Activated CD4-positive, alpha-beta T cell treated with anti-CD3 and anti-CD28 coated beads, Interleukin-2, amount 10 ng/mL, durations not matched to agents 24 days and 14 days (primary cell): ENCODE measurements at regions of chr9 and their contacts with region 1.

Region 1: DNA sequence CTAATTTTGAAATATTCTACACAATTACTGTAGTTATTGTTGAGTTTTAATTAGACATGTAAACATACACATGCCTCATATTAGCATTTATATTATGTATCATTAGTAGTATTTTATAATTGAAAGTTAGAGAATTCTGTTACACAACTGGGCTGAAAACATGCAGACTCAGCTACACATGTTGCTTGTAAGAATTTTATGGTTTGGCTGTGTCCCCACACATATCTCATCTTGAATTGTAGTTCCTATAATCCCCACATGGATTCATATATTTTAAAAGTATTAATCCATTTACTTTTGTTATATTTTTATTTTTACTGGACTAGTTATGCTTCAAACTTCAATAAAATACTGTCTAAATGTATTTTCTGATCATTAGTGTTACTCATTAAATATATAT is 2075.3 kb upstream of the C9orf72 start:
- DNase-seq: no peak
- H3K4me3 Mint-ChIP-seq: no peak overlapping the region
- H3K27ac Mint-ChIP-seq: no peak overlapping the region
- H3K4me1 Mint-ChIP-seq: no peaks in the 10 kb centered on the region
- H3K27me3 Mint-ChIP-seq: no peaks in the 10 kb centered on the region

Region 2: DNA sequence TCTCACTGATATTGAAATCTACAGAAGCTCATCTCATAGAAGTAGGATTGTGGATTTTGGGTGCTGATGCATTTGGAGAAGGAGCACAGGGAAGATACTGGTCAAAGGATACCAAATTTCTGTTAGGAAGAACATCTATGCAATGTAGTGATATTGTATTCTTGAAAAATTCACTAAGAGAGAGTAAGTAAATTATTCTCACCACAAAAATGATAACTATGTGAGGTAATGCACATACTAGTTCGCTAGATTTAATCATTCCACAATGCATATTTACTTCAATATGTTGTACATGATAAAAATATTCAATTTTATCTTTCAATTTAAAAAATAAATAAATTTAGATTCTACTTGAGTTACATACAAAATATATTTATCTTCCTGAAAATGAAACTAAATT is 34.8 kb before region 1 on chr9:
- intact Hi-C with region 1: no loop called
- DNase-seq: no peak
- H3K4me3 Mint-ChIP-seq: no peak overlapping the region
- H3K27ac Mint-ChIP-seq: no peak overlapping the region
- H3K4me1 Mint-ChIP-seq: no peaks in the 10 kb centered on the region
- H3K27me3 Mint-ChIP-seq: no peaks in the 10 kb centered on the region

Region 3: GRCh38 chr9:29701551-29701950 is 53.0 kb after region 1 on chr9:
- intact Hi-C with region 1: loop called (anchors 10 kb)
- DNase-seq: no peak
- H3K4me3 Mint-ChIP-seq: no peak overlapping the region
- H3K27ac Mint-ChIP-seq: no peak overlapping the region
- H3K4me1 Mint-ChIP-seq: no peaks in the 10 kb centered on the region
- H3K27me3 Mint-ChIP-seq: no peaks in the 10 kb centered on the region